Naive thymus-derived CD4-positive, alpha-beta T cell (primary cell): ENCODE measurements at regions of chrX and their contacts with region 1.

Region 1: DNA sequence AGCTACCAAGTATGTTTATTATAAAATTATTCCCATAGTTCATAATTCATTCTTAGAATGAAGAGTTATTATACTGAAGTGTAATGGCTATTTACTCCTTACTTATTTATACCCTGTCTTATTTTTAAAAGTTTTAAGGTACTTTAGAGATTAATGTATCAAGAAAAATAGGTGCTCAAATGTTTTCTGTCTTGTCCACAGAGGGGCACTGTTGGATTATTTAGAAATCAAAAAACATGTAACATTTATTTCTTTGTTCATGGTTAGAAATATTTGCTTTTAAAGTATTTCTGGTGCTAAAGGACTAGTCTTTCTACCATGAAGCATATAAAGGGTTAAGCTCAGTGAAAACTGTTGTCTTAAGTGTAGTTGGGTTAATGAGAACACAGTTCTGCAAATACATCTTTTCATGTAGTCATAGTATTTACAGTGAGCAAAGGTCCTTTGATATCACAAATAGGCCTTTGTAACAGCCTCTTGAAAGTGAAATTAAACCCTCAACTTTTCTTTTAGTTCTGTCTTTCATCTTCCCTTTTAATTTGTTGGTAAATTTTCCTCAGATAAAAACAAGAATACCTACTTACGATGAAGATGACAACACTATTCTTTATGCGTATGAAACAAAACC is 7.7 kb downstream of the SCML1 start:
- DNase-seq: peak in 4 of 9 donors; percentile 27 to 32 (median 28)
- ATAC-seq: peak; percentile 34
- H3K4me3 ChIP-seq: no peak overlapping the region
- H3K4me3 Mint-ChIP-seq: no peak overlapping the region
- H3K27ac ChIP-seq: no peak overlapping the region
- H3K27ac Mint-ChIP-seq: no peak overlapping the region
- H3K4me1 ChIP-seq: peaks cover 0 to 9% of the 10 kb centered on the region in 2 donors
- H3K4me1 Mint-ChIP-seq: peaks cover 3 to 66% (median 46%) of the 10 kb centered on the region in 7 donors
- H3K27me3 ChIP-seq: no peaks in the 10 kb centered on the region
- H3K27me3 Mint-ChIP-seq: peaks cover 0 to 29% (median 0%) of the 10 kb centered on the region in 5 donors

Region 2: DNA sequence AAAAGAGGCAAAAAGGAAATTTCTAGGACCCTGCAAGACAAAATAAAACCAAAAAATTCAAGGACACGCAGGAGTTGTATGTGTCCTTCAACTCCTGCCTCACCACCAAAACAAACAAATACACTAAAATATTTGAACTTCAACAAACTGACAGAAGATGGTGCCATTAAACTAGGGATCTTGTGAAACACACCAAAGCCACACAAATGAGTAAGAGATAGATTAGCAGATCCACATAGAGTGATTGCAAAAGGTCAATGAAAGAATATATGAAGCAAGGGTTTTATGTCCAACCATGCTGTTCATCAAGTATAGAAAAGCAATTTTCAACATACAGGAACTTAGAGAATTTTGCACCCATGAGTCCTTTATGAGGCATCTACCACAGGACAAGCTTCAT is 47.8 kb before region 1 on chrX:
- CTCF ChIA-PET with region 1: no interaction called
- POLR2A ChIA-PET with region 1: no interaction called
- intact Hi-C with region 1: loop called in 1 of 2 experiments (anchors 1 kb)
- DNase-seq: peak in 5 of 9 donors; percentile 0 to 28 (median 14)
- ATAC-seq: no peak
- H3K4me3 ChIP-seq: no peak overlapping the region
- H3K4me3 Mint-ChIP-seq: no peak overlapping the region
- H3K27ac ChIP-seq: no peak overlapping the region
- H3K27ac Mint-ChIP-seq: no peak overlapping the region
- H3K4me1 ChIP-seq: no peaks in the 10 kb centered on the region
- H3K4me1 Mint-ChIP-seq: no peaks in the 10 kb centered on the region
- H3K27me3 ChIP-seq: no peaks in the 10 kb centered on the region
- H3K27me3 Mint-ChIP-seq: no peaks in the 10 kb centered on the region

Region 3: GRCh38 chrX:17860811-17861488 is 115.9 kb after region 1 on chrX and contains the start of gene RAI2:
- CTCF ChIA-PET with region 1: no interaction called
- POLR2A ChIA-PET with region 1: no interaction called
- intact Hi-C with region 1: loop called in 1 of 2 experiments (anchors 2 kb)
- DNase-seq: peak in 6 of 9 donors; percentile 8 to 51 (median 26)
- ATAC-seq: peak; percentile 73
- H3K4me3 ChIP-seq: peak within 1 kb of the TSS; percentile 37
- H3K4me3 Mint-ChIP-seq: peak within 1 kb of the TSS; percentile 54 to 89 (median 86)
- H3K27ac ChIP-seq: no peak within 1 kb of the TSS
- H3K27ac Mint-ChIP-seq: peak within 1 kb of the TSS in 2 of 9 donors; percentile 62 to 70
- H3K4me1 ChIP-seq: no peaks in the 10 kb centered on the region
- H3K4me1 Mint-ChIP-seq: peaks cover 0 to 11% (median 5%) of the 10 kb centered on the region in 7 donors
- H3K27me3 ChIP-seq: no peaks in the 10 kb centered on the region
- H3K27me3 Mint-ChIP-seq: peaks cover 0 to 50% (median 27%) of the 10 kb centered on the region in 5 donors
- total RNA-seq, gene RAI2: 1.6 to 2.8 (median 2.2) TPM in 4 of 5 experiments, not detected in the other

Region 4: DNA sequence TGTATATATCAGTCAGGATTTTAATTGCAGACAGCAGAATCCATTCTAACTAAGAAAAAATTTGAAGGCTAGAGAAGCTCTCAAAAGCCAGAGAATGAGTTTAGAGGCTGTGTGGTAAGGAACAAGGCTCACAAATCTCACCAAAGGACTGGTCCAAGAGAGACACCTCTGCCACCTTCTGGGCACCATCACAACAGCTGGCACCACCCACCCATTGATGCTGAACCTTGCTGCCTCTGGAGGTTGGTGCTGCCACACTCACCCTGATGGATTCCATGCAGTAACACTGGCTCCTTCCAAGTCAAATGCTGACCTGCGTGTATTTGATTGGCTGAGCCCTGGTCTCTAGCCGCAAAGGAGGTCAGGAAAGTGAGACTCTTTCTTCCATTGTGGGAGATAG is 374.8 kb after region 1 on chrX:
- CTCF ChIA-PET with region 1: no interaction called
- POLR2A ChIA-PET with region 1: no interaction called
- intact Hi-C with region 1: loop called in 1 of 2 experiments (anchors 2 kb)
- DNase-seq: peak in 5 of 9 donors; percentile 11 to 34 (median 16)
- ATAC-seq: no peak
- H3K4me3 ChIP-seq: no peak overlapping the region
- H3K4me3 Mint-ChIP-seq: no peak overlapping the region
- H3K27ac ChIP-seq: no peak overlapping the region
- H3K27ac Mint-ChIP-seq: no peak overlapping the region
- H3K4me1 ChIP-seq: no peaks in the 10 kb centered on the region
- H3K4me1 Mint-ChIP-seq: no peaks in the 10 kb centered on the region
- H3K27me3 ChIP-seq: no peaks in the 10 kb centered on the region
- H3K27me3 Mint-ChIP-seq: peaks cover 0 to 6% (median 5%) of the 10 kb centered on the region in 5 donors

Region 5: GRCh38 chrX:19334945-19335626 is 1590.1 kb after region 1 on chrX:
- CTCF ChIA-PET with region 1: no interaction called
- POLR2A ChIA-PET with region 1: no interaction called
- intact Hi-C with region 1: loop called (anchors 2 to 5 kb)
- DNase-seq: peak in 4 of 9 donors; percentile 24 to 32 (median 28)
- ATAC-seq: no peak
- H3K4me3 ChIP-seq: no peak overlapping the region
- H3K4me3 Mint-ChIP-seq: peak overlapping the region in 1 of 10 donors; percentile 32
- H3K27ac ChIP-seq: no peak overlapping the region
- H3K27ac Mint-ChIP-seq: peak overlapping the region in 1 of 9 donors; percentile 77
- H3K4me1 ChIP-seq: no peaks in the 10 kb centered on the region
- H3K4me1 Mint-ChIP-seq: peaks cover 0 to 5% (median 2%) of the 10 kb centered on the region in 7 donors
- H3K27me3 ChIP-seq: no peaks in the 10 kb centered on the region
- H3K27me3 Mint-ChIP-seq: peaks cover 0 to 4% (median 0%) of the 10 kb centered on the region in 5 donors